Endothelial cell of umbilical vein (primary cell): ENCODE measurements at regions of chr6 and their contacts with region 1.

Region 1: DNA sequence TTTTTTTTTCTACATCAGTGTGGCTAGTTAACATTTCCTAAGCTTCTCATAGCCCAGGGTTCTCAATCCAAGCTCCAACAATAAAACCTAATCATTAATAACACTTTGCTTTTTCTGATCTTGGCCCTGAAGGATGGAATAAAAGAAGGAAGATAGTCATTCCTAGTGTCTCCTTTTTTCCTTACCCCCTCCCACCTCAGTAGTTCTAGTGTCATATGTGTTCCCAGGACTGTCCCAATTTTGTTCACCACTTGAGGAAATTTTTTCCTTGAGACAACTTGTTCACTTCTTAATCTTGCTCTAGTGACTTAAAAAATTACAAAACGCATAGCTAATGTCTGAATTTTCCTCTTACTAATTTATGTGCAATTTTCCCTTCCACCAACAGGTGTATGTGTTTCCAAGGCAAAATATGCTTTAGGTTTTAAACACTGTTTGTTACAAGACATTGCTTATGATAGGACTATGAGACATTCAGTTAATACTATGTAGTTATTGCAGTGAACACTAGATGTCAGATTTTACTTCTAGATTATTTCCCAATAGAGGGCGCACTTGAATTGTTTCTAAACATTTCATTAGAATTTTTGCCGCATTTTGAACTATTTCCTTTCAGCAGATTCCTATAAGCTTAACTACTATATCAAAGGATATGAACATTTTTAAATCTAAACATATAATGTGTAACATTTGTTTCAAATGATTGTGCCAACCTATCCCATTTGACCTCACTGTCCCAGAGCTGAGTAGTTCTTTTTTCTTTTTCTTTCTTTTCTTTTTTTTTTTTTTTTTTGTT is 18.5 kb upstream of the C6orf141 start:
- DNase-seq: peak; percentile 84
- H3K4me3 ChIP-seq: peak overlapping the region in 1 of 3 experiments; percentile 58
- H3K27ac ChIP-seq: no peak overlapping the region
- H3K4me1 ChIP-seq: peaks cover 3% of the 10 kb centered on the region
- H3K27me3 ChIP-seq: peaks cover 0 to 4% of the 10 kb centered on the region in 2 experiments
- CTCF ChIP-seq: peak; percentile 66 to 71
- POLR2A ChIP-seq: no peak

Region 2: GRCh38 chr6:49326337-49326736 is 205.6 kb before region 1 on chr6:
- CTCF ChIA-PET with region 1: no interaction called
- POLR2A ChIA-PET with region 1: no interaction called
- dilution Hi-C with region 1: no loop called
- intact Hi-C with region 1: no loop called
- DNase-seq: peak; percentile 95
- H3K4me3 ChIP-seq: peak overlapping the region in 1 of 3 experiments; percentile 4
- H3K27ac ChIP-seq: peak overlapping the region; percentile 99
- H3K4me1 ChIP-seq: peaks cover 33% of the 10 kb centered on the region
- H3K27me3 ChIP-seq: no peaks in the 10 kb centered on the region
- CTCF ChIP-seq: no peak
- POLR2A ChIP-seq: peak; percentile 44

Region 3: DNA sequence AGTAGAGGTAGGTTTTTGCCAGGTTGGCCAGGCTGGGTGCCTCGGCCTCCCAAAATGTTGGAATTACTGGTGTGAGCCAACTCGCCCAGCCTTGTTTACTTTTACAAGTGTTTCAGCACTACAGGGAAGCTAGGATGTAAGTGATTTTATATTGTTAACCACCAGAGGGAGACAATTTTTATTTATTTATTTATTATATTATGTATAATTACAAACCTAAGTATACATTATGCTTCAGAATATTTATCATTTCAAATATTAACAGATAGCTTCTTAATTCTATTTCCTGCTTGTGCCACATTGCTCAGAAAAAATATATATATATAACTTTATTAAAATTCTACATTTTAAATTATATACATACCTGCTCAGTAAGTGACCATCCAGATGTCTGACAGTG is 78.8 kb before region 1 on chr6:
- CTCF ChIA-PET with region 1: interaction called, 15 read pairs
- POLR2A ChIA-PET with region 1: no interaction called
- dilution Hi-C with region 1: no loop called
- intact Hi-C with region 1: no loop called
- DNase-seq: peak; percentile 8
- H3K4me3 ChIP-seq: no peak overlapping the region
- H3K27ac ChIP-seq: no peak overlapping the region
- H3K4me1 ChIP-seq: no peaks in the 10 kb centered on the region
- H3K27me3 ChIP-seq: no peaks in the 10 kb centered on the region
- CTCF ChIP-seq: peak in 1 of 2 donors; percentile 12
- POLR2A ChIP-seq: no peak

Region 4: DNA sequence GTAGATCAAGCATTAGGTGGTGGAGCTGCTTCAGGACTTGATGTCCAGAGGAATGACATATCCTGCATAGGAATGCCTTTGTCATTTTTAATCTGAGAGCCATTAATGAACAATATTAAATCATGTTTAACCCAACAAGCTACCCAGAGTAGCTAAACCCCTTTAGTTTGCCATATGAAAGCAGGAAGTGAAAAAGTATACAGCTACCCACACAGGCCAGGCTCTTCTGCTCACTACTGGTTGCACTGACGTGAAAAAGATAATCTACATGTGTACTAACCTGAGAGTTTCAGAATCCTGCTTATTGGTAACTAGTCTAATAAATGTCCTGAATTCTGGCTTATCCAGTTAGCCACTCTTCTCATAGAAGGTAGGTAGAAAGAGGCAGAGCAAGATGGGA is 12.3 kb before region 1 on chr6:
- CTCF ChIA-PET with region 1: interaction called, 22 read pairs
- POLR2A ChIA-PET with region 1: no interaction called
- dilution Hi-C with region 1: no loop called
- intact Hi-C with region 1: no loop called
- DNase-seq: no peak
- H3K4me3 ChIP-seq: no peak overlapping the region
- H3K27ac ChIP-seq: no peak overlapping the region
- H3K4me1 ChIP-seq: no peaks in the 10 kb centered on the region
- H3K27me3 ChIP-seq: peaks cover 2 to 8% of the 10 kb centered on the region in 2 experiments
- CTCF ChIP-seq: no peak
- POLR2A ChIP-seq: no peak

Region 5: GRCh38 chr6:49570474-49571079 is 38.6 kb after region 1 on chr6:
- CTCF ChIA-PET with region 1: interaction called, 205 read pairs
- POLR2A ChIA-PET with region 1: interaction called, 3 read pairs
- dilution Hi-C with region 1: no loop called
- intact Hi-C with region 1: loop called (anchors 1 kb)
- DNase-seq: peak; percentile 67
- H3K4me3 ChIP-seq: no peak overlapping the region
- H3K27ac ChIP-seq: peak overlapping the region; percentile 55
- H3K4me1 ChIP-seq: peaks cover 36% of the 10 kb centered on the region
- H3K27me3 ChIP-seq: no peaks in the 10 kb centered on the region
- CTCF ChIP-seq: peak; percentile 20 to 25
- POLR2A ChIP-seq: no peak

Region 6: GRCh38 chr6:49606696-49607390 is 74.9 kb after region 1 on chr6:
- CTCF ChIA-PET with region 1: interaction called, 341 read pairs
- POLR2A ChIA-PET with region 1: no interaction called
- dilution Hi-C with region 1: no loop called
- intact Hi-C with region 1: loop called (anchors 1 kb)
- DNase-seq: peak; percentile 79
- H3K4me3 ChIP-seq: no peak overlapping the region
- H3K27ac ChIP-seq: no peak overlapping the region
- H3K4me1 ChIP-seq: peaks cover 3% of the 10 kb centered on the region
- H3K27me3 ChIP-seq: peaks cover 5 to 16% of the 10 kb centered on the region in 2 experiments
- CTCF ChIP-seq: peak; percentile 70 to 81
- POLR2A ChIP-seq: no peak

Region 7: DNA sequence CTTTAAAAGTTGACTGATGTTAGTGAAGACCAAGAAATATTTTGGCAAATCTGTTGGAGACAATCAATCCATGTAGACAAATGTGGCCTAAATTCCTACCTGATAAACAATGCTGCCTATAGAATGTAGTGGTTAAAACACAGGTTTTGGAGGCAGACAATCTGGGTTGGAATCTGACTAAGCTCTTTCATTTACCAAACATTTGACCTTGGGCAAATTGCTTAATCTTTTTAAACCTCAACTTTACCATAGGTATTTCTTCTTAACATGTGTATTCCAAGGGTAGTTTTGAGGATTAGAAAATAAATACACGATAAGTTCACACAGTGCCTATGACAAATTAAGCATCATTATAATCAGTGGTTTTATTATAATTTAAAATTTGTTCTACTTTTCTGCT is 93.2 kb after region 1 on chr6:
- CTCF ChIA-PET with region 1: interaction called, 46 read pairs
- POLR2A ChIA-PET with region 1: no interaction called
- dilution Hi-C with region 1: no loop called
- intact Hi-C with region 1: no loop called
- DNase-seq: no peak
- H3K4me3 ChIP-seq: no peak overlapping the region
- H3K27ac ChIP-seq: no peak overlapping the region
- H3K4me1 ChIP-seq: no peaks in the 10 kb centered on the region
- H3K27me3 ChIP-seq: peaks cover 0 to 2% of the 10 kb centered on the region in 2 experiments
- CTCF ChIP-seq: no peak
- POLR2A ChIP-seq: no peak